ENCODE measurements at regions of chr12 and their contacts with region 1.

Region 1: GRCh38 chr12:133181238-133181959 is at the start of gene ZNF268:
- DNase-seq: peak; percentile 88
- ATAC-seq: peak; percentile 97
- H3K4me3 ChIP-seq: peak within 1 kb of the TSS; percentile 89 to 99 (median 96)
- H3K27ac ChIP-seq: peak within 1 kb of the TSS; percentile 72
- H3K4me1 ChIP-seq: peaks cover 9% of the 10 kb centered on the region; the same call in 1 of the 2 replicates
- H3K27me3 ChIP-seq: no peaks in the 10 kb centered on the region; a peak in 1 of 5 replicates
- CTCF ChIP-seq: peak; percentile 88
- EP300 ChIP-seq: no peak
- POLR2A ChIP-seq: peak; percentile 72 to 84
- RAD21 ChIP-seq: peak; percentile 75
- total RNA-seq, gene ZNF268: 31.3 and 54.4 TPM in 2 replicates

Region 2: GRCh38 chr12:132986001-132986912 is 195.1 kb before region 1 on chr12 and contains the start of gene ZNF26:
- CTCF ChIA-PET with region 1: interaction called, 3 read pairs
- POLR2A ChIA-PET with region 1: interaction called, 14 read pairs
- in situ Hi-C with region 1: no loop called
- intact Hi-C with region 1: no loop called
- DNase-seq: peak; percentile 90
- ATAC-seq: peak; percentile 98
- H3K4me3 ChIP-seq: peak within 1 kb of the TSS; percentile 83 to 99 (median 96)
- H3K27ac ChIP-seq: peak within 1 kb of the TSS; percentile 60
- H3K4me1 ChIP-seq: peaks cover 17% of the 10 kb centered on the region
- H3K27me3 ChIP-seq: no peaks in the 10 kb centered on the region; a peak in 1 of 5 replicates
- CTCF ChIP-seq: peak; percentile 35; the same call in 1 of the 2 replicates
- EP300 ChIP-seq: 0 out of 4 replicates have a peak, but pooled peaks of 1 of the 2 experiments have one; percentile 57
- POLR2A ChIP-seq: peak; percentile 85 to 89
- RAD21 ChIP-seq: peak; percentile 25; the same call in 1 of the 2 replicates
- total RNA-seq, gene ZNF26: 6.5 and 8.4 TPM in 2 replicates

Region 3: DNA sequence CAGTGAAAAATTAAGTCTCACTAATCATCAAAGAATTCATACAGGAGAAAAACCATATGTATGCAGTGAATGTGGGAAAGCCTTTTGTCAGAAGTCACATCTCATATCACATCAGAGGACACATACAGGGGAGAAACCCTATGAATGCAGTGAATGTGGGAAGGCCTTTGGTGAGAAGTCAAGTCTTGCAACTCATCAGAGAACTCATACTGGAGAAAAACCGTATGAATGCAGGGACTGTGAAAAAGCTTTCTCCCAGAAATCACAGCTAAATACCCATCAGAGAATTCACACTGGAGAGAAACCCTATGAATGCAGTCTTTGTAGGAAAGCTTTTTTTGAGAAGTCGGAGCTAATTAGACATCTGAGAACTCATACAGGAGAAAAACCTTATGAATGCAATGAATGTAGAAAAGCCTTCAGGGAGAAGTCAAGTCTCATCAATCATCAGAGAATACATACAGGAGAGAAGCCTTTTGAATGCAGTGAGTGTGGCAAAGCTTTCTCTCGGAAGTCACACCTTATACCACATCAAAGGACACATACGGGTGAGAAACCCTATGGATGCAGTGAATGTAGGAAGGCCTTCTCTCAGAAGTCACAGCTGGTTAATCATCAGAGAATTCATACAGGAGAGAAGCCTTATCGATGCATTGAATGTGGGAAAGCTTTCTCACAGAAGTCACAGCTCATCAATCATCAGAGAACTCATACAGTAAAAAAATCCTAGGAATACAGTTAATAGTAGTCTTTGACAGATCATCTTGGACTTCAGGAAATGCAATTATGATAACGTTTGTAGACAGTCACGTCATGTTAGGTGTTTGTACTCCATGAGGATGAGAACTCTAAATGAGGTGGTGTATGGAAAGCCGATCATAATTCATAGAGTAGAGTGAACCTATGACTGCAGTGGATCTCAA is 122.9 kb before region 1 on chr12:
- CTCF ChIA-PET with region 1: no interaction called
- POLR2A ChIA-PET with region 1: no interaction called
- in situ Hi-C with region 1: no loop called
- intact Hi-C with region 1: no loop called
- DNase-seq: no peak
- ATAC-seq: no peak
- H3K4me3 ChIP-seq: no peak overlapping the region
- H3K27ac ChIP-seq: no peak overlapping the region
- H3K4me1 ChIP-seq: no peaks in the 10 kb centered on the region
- H3K27me3 ChIP-seq: no peaks in the 10 kb centered on the region
- CTCF ChIP-seq: no peak
- EP300 ChIP-seq: no peak
- POLR2A ChIP-seq: no peak
- RAD21 ChIP-seq: no peak

Region 4: DNA sequence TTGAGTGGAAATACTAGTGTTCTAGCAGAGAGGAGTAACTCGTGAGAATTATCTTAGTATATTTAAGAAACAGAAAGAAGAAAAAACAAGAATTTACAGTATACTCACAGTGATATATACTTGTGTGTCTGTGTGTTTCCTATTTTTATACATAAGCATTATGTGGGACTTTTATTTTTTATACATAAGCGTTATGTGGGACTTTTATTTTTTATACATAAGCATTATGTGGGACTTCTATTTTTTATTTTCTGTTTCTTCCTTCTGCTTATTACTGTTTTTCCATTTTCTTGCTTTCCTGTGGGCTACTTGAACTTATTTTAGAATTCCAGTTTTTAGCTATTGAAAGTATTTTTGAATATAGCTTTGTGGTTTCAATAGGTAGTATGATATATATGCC is 107.6 kb before region 1 on chr12:
- CTCF ChIA-PET with region 1: no interaction called
- POLR2A ChIA-PET with region 1: no interaction called
- in situ Hi-C with region 1: no loop called
- intact Hi-C with region 1: no loop called
- DNase-seq: no peak
- ATAC-seq: no peak
- H3K4me3 ChIP-seq: no peak overlapping the region
- H3K27ac ChIP-seq: no peak overlapping the region
- H3K4me1 ChIP-seq: no peaks in the 10 kb centered on the region
- H3K27me3 ChIP-seq: no peaks in the 10 kb centered on the region
- CTCF ChIP-seq: no peak
- EP300 ChIP-seq: no peak
- POLR2A ChIP-seq: no peak
- RAD21 ChIP-seq: no peak

Region 5: GRCh38 chr12:133130038-133130807 is 51.2 kb before region 1 on chr12 and contains the starts of genes ZNF10 and ZNF891:
- CTCF ChIA-PET with region 1: no interaction called
- POLR2A ChIA-PET with region 1: interaction called, 13 read pairs
- in situ Hi-C with region 1: no loop called
- intact Hi-C with region 1: no loop called
- DNase-seq: peak; percentile 90
- ATAC-seq: peak; percentile 99
- H3K4me3 ChIP-seq: peak within 1 kb of the TSS; percentile 83 to 99 (median 96)
- H3K27ac ChIP-seq: peak within 1 kb of the TSS; percentile 90
- H3K4me1 ChIP-seq: peaks cover 10% of the 10 kb centered on the region
- H3K27me3 ChIP-seq: no peaks in the 10 kb centered on the region; a peak in 1 of 5 replicates
- CTCF ChIP-seq: peak; percentile 33; the same call in 1 of the 2 replicates
- EP300 ChIP-seq: 0 out of 4 replicates have a peak, but pooled peaks of 1 of the 2 experiments have one; percentile 6
- POLR2A ChIP-seq: peak; percentile 94 to 95
- RAD21 ChIP-seq: peak; percentile 23; the same call in 1 of the 2 replicates
- total RNA-seq, gene ZNF10: 6.5 and 8.9 TPM in 2 replicates
- total RNA-seq, gene ZNF891: 1.8 and 2.1 TPM in 2 replicates